A549 (cell line): ENCODE measurements at regions of chr4 and their contacts with region 1.

Region 1: GRCh38 chr4:122914292-122914904 is 8.0 kb downstream of the NUDT6 start:
- DNase-seq: peak in 1 of 2 experiments; percentile 42
- ATAC-seq: peak; percentile 86 to 87
- H3K4me3 ChIP-seq: no peak overlapping the region
- H3K27ac ChIP-seq: peak overlapping the region; percentile 62 to 77
- H3K4me1 ChIP-seq: peaks cover 74% of the 10 kb centered on the region
- CTCF ChIP-seq: peak; percentile 64
- EP300 ChIP-seq: no peak
- POLR2A ChIP-seq: no peak
- RAD21 ChIP-seq: peak; percentile 80 to 81

Region 2: GRCh38 chr4:122732329-122733026 is 181.9 kb before region 1 on chr4 and contains the start of gene BBS12:
- CTCF ChIA-PET with region 1: interaction called, 15 read pairs
- POLR2A ChIA-PET with region 1: interaction called, 4 read pairs
- DNase-seq: peak; percentile 96 to 98
- ATAC-seq: peak; percentile 97 to 98
- H3K4me3 ChIP-seq: peak within 1 kb of the TSS; percentile 53
- H3K27ac ChIP-seq: peak within 1 kb of the TSS; percentile 51 to 85
- H3K4me1 ChIP-seq: peaks cover 12% of the 10 kb centered on the region; the same call in 2 of the 3 replicates
- CTCF ChIP-seq: peak; percentile 45
- EP300 ChIP-seq: no peak
- POLR2A ChIP-seq: peak; percentile 25
- RAD21 ChIP-seq: peak; percentile 42 to 50
- polyA plus RNA-seq, gene BBS12: 3.4 and 3.7 TPM in 2 replicates

Region 3: GRCh38 chr4:122758033-122758432 is 156.4 kb before region 1 on chr4:
- CTCF ChIA-PET with region 1: interaction called, 48 read pairs
- POLR2A ChIA-PET with region 1: no interaction called
- DNase-seq: peak in 1 of 2 experiments; percentile 48
- ATAC-seq: peak; percentile 73 to 78
- H3K4me3 ChIP-seq: no peak overlapping the region
- H3K27ac ChIP-seq: peak overlapping the region; percentile 77 to 82
- H3K4me1 ChIP-seq: peaks cover 38% of the 10 kb centered on the region
- CTCF ChIP-seq: peak; percentile 78
- EP300 ChIP-seq: no peak
- POLR2A ChIP-seq: no peak
- RAD21 ChIP-seq: peak; percentile 80 to 87

Region 4: DNA sequence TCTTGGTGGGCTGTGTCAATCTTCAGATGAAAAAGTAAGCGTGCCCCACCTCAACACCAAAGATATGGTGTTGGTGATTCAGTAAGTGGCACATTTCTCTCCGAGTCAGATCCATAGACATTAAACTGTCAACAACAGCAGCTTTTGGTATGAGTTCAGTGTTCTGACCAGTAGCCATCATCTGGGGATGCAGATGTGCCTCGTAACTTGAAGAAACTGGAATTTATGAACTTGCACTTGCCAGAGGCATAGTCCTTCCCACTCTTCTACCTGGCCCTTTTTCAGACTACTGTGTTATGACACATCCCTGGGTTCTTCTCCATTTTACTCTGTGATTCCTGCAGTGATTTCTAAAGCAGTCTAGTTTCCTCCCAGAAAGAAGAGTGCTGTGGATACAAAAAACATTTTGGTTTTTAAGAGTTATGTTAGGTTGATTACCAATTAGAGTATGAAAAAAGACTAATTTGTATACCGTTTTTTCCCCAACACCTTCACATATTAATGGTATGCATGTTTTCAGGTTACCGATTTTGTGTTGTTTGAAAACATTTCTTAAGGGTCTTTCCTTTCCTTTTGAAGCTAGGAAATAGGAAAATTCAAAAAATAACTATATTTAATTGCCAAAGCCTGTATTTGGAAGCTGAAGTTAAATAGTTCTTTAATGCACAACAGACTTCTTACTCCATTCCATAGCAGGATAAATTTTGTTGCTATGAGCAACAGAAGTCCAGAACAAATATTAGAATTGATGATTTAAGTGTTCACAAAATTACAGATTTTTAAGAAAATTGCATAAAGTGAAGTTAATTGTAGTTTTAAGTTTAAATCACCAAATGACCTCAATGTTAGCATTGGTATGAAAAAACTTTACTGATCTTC is 31.3 kb before region 1 on chr4:
- CTCF ChIA-PET with region 1: no interaction called
- POLR2A ChIA-PET with region 1: no interaction called
- DNase-seq: no peak
- ATAC-seq: no peak
- H3K4me3 ChIP-seq: no peak overlapping the region
- H3K27ac ChIP-seq: 0 out of 6 replicates have a peak overlapping the region, but pooled peaks of 1 of the 2 experiments have one; percentile 12
- H3K4me1 ChIP-seq: peaks cover 20% of the 10 kb centered on the region; the same call in 2 of the 3 replicates
- CTCF ChIP-seq: no peak
- EP300 ChIP-seq: no peak
- POLR2A ChIP-seq: no peak
- RAD21 ChIP-seq: no peak

Region 5: GRCh38 chr4:122901247-122902010 is 13.0 kb before region 1 on chr4:
- CTCF ChIA-PET with region 1: interaction called, 35 read pairs
- POLR2A ChIA-PET with region 1: no interaction called
- DNase-seq: no peak
- ATAC-seq: no peak
- H3K4me3 ChIP-seq: no peak overlapping the region
- H3K27ac ChIP-seq: peak overlapping the region; percentile 6 to 87; a peak in 4 of 6 replicates
- H3K4me1 ChIP-seq: peaks cover 69% of the 10 kb centered on the region
- CTCF ChIP-seq: no peak
- EP300 ChIP-seq: no peak
- POLR2A ChIP-seq: no peak
- RAD21 ChIP-seq: no peak